ENCODE measurements at regions of chr3 and their contacts with region 1.

Region 1: DNA sequence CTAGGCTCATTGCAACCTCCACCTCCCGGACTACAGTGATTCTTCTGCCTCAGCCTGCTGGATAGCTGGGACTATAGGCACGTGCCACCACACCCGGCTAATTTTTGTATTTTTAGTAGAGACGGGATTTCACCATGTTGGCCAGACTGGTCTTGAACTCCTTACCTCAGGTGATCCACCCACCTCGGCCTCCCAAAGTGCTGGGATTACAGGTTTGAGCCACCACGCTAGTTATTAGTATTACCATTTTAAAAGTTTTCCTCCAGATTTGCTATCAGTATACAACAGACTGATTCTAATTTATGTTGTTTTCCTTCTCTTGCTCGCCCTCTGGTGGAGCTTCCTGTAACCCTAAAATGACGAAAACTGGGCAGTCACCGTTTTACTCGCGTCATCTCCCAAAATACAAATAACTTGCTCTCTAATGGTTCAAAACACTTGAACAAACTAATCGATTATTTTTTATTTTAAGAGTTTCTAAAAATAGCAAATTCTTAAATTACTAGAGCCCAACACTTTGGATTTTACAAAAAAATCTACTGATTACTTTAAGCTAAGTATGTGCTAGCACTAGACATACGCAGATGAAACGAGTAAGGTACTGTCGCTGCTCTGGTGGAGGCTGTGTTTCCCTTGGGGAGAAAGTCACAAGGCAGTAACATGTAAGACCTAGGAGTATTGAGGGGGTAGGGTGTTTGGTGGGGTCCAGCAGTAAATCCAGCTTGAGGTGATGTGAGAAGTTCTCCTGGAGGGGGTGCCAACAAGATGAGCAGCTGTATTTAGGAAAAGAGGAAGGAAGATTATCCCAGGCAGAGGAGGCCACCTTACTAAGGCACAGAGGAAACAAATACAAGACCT is 203.3 kb downstream of the MBNL1 start:
- DNase-seq: peak; percentile 42 to 77 (median 43)
- ATAC-seq: peak; percentile 73 to 82
- H3K4me3 ChIP-seq: peak overlapping the region; percentile 44
- H3K27ac ChIP-seq: no peak overlapping the region
- H3K4me1 ChIP-seq: no peaks in the 10 kb centered on the region
- H3K27me3 ChIP-seq: no peaks in the 10 kb centered on the region

Region 2: GRCh38 chr3:152524198-152525140 is 52.4 kb after region 1 on chr3:
- intact Hi-C with region 1: loop called in 2 of 4 experiments (anchors 5 to 10 kb)
- DNase-seq: no peak
- ATAC-seq: no peak
- H3K4me3 ChIP-seq: no peak overlapping the region
- H3K27ac ChIP-seq: no peak overlapping the region
- H3K4me1 ChIP-seq: no peaks in the 10 kb centered on the region
- H3K27me3 ChIP-seq: no peaks in the 10 kb centered on the region